Common myeloid progenitor, CD34-positive (primary cell): ENCODE measurements at regions of chr11 and their contacts with region 1.

Region 1: DNA sequence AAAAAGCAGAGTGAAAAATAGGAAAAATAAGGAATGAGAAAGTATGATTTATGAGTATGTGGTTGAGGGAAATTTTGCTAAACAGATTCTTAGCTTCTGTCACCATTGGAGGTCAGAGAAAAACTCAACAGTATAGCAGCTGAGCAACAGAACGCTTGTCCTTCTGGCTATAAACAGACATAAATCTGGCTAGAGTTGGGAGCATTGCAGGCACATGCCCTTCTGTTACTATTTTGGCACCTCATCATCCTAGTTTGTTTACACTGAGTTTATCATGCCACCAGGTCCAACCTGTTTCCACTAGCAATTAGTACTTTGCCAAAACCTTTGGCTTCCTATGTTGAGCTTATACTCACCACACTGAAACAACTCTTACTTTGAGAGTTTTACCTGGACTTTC is 6.9 kb downstream of the UBE4A start:
- DNase-seq: no peak
- H3K4me3 ChIP-seq: no peak overlapping the region
- H3K27ac ChIP-seq: no peak overlapping the region
- H3K4me1 ChIP-seq: no peaks in the 10 kb centered on the region
- H3K27me3 ChIP-seq: no peaks in the 10 kb centered on the region

Region 2: DNA sequence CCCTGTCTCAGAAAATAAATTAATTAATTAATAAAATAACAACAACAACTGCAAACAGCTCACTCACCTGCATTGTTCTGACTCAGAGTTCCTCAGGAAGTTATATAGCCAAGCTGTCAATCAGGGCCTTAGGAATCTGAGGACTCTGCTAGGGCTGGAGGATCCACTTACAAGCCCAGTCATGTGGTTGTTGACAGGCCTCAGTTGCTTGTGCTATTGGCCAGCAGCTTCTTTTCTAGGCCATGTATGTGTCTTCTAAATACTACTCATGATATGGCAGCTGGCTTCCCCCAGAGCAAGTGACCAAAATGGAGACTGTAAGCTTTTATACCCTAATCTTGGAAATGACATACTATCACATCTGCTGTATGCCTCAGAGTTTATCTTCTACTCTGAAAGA is 14.3 kb after region 1 on chr11:
- CTCF ChIA-PET with region 1: interaction called, 20 read pairs
- POLR2A ChIA-PET with region 1: no interaction called
- DNase-seq: no peak
- H3K4me3 ChIP-seq: no peak overlapping the region
- H3K27ac ChIP-seq: no peak overlapping the region
- H3K4me1 ChIP-seq: no peaks in the 10 kb centered on the region
- H3K27me3 ChIP-seq: no peaks in the 10 kb centered on the region